Lower leg skin (tissue), 4 donors: ENCODE measurements at regions of chr1 and their contacts with region 1.

Region 1: DNA sequence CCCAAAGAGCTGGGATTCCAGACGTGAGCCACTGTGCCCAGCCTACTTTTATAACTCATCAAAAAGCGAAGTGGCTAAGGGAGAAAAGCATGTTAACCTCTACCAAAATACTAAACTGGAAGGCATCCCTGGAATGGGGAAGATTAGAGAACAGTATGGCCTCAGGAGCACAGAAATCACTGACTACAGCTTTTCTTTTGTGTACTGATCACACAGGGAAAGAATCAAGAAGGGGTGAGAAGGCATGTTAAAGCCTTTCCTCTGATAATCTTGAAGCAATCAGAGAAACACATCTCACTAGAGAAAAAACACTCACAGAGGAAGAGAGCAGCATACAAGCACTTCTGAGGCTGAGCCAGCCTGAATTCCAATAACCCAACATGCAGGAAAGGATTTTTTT is 10.7 kb downstream of the PCAT6 start:
- DNase-seq: no peak
- H3K4me3 ChIP-seq: no peak overlapping the region
- CTCF ChIP-seq: no peak
- POLR2A ChIP-seq: no peak

Region 2: GRCh38 chr1:202576816-202577215 is 244.6 kb before region 1 on chr1:
- intact Hi-C with region 1: no loop called
- DNase-seq: no peak
- H3K4me3 ChIP-seq: no peak overlapping the region
- CTCF ChIP-seq: no peak
- POLR2A ChIP-seq: no peak

Region 3: GRCh38 chr1:203549309-203549708 is 727.9 kb after region 1 on chr1:
- intact Hi-C with region 1: loop called (anchors 10 kb)
- DNase-seq: no peak
- H3K4me3 ChIP-seq: no peak overlapping the region
- CTCF ChIP-seq: no peak
- POLR2A ChIP-seq: no peak